ENCODE measurements at regions of chr6 and their contacts with region 1.

Region 1: GRCh38 chr6:33620856-33621710 is at the start of gene ITPR3:
- DNase-seq: peak; percentile 28
- ATAC-seq: peak; percentile 80
- H3K4me3 ChIP-seq: peak within 1 kb of the TSS; percentile 86
- H3K27ac ChIP-seq: peak within 1 kb of the TSS; percentile 88
- H3K4me1 ChIP-seq: peaks cover 14% of the 10 kb centered on the region
- H3K27me3 ChIP-seq: no peaks in the 10 kb centered on the region
- CTCF ChIP-seq: no peak
- EP300 ChIP-seq: no peak
- POLR2A ChIP-seq: peak; percentile 72
- RAD21 ChIP-seq: no peak
- polyA plus RNA-seq, gene ITPR3: 0.32 to 0.44 TPM

Region 2: DNA sequence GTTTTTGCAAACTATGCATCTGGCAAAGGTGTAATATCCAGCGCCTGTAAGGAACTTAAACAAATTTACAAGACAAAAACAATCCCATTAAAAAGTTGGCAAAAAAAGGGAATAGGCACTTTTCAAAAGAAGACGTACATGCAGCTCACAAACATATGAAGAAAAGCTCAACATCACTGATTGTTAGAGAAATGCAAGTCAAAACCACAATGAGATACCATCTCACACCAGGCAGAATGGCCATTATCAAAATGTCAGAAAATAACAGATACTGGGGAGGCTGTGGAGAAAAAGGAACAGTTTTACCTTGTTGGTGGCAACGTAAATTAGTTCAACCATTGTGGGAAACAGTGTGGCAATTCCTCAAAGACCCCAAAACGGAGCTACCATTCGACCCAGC is 1303.5 kb before region 1 on chr6:
- CTCF ChIA-PET with region 1: no interaction called
- POLR2A ChIA-PET with region 1: no interaction called
- RAD21 ChIA-PET with region 1: no interaction called
- SMC1A ChIA-PET with region 1: no interaction called
- in situ Hi-C with region 1: no loop called
- intact Hi-C with region 1: no loop called
- DNase-seq: no peak
- ATAC-seq: no peak
- H3K4me3 ChIP-seq: no peak overlapping the region
- H3K27ac ChIP-seq: no peak overlapping the region
- H3K4me1 ChIP-seq: no peaks in the 10 kb centered on the region
- H3K27me3 ChIP-seq: peaks cover 0 to 5% of the 10 kb centered on the region in 2 experiments; a peak in 2 of 4 replicates
- CTCF ChIP-seq: no peak
- EP300 ChIP-seq: no peak
- POLR2A ChIP-seq: no peak
- RAD21 ChIP-seq: no peak

Region 3: GRCh38 chr6:33579828-33580714 is 41.0 kb before region 1 on chr6 and contains the start of gene BAK1:
- CTCF ChIA-PET with region 1: interaction called, 3 read pairs
- POLR2A ChIA-PET with region 1: interaction called, 11 read pairs
- RAD21 ChIA-PET with region 1: interaction called, 8 read pairs
- SMC1A ChIA-PET with region 1: interaction called, 3 read pairs
- in situ Hi-C with region 1: no loop called
- intact Hi-C with region 1: no loop called
- DNase-seq: peak; percentile 56
- ATAC-seq: peak; percentile 93
- H3K4me3 ChIP-seq: peak within 1 kb of the TSS; percentile 93
- H3K27ac ChIP-seq: peak within 1 kb of the TSS; percentile 95
- H3K4me1 ChIP-seq: peaks cover 16% of the 10 kb centered on the region
- H3K27me3 ChIP-seq: no peaks in the 10 kb centered on the region
- CTCF ChIP-seq: peak; percentile 41 to 57 (median 54); a peak in 5 of 6 replicates
- EP300 ChIP-seq: no peak
- POLR2A ChIP-seq: peak; percentile 76
- RAD21 ChIP-seq: 0 out of 2 replicates have a peak, but pooled peaks have one; percentile 22
- polyA plus RNA-seq, gene BAK1: 6.3 to 13.0 TPM

Region 4: GRCh38 chr6:33592411-33593054 is 28.6 kb before region 1 on chr6:
- CTCF ChIA-PET with region 1: interaction called, 18 read pairs
- POLR2A ChIA-PET with region 1: interaction called, 4 read pairs
- RAD21 ChIA-PET with region 1: interaction called, 14 read pairs
- SMC1A ChIA-PET with region 1: interaction called, 7 read pairs
- in situ Hi-C with region 1: no loop called
- intact Hi-C with region 1: no loop called
- DNase-seq: peak; percentile 63
- ATAC-seq: peak; percentile 59
- H3K4me3 ChIP-seq: peak overlapping the region; percentile 46; the same call in 1 of the 2 replicates
- H3K27ac ChIP-seq: peak overlapping the region; percentile 23
- H3K4me1 ChIP-seq: peaks cover 44% of the 10 kb centered on the region
- H3K27me3 ChIP-seq: no peaks in the 10 kb centered on the region
- CTCF ChIP-seq: no peak
- EP300 ChIP-seq: no peak
- POLR2A ChIP-seq: no peak; the same call in 1 of the 2 replicates
- RAD21 ChIP-seq: no peak

Region 5: GRCh38 chr6:33633462-33634158 is 12.5 kb after region 1 on chr6:
- CTCF ChIA-PET with region 1: interaction called, 18 read pairs
- POLR2A ChIA-PET with region 1: interaction called, 6 read pairs
- RAD21 ChIA-PET with region 1: interaction called, 6 read pairs
- SMC1A ChIA-PET with region 1: interaction called, 5 read pairs
- in situ Hi-C with region 1: no loop called
- intact Hi-C with region 1: no loop called
- DNase-seq: no peak
- ATAC-seq: peak; percentile 85
- H3K4me3 ChIP-seq: peak overlapping the region; percentile 70
- H3K27ac ChIP-seq: no peak overlapping the region
- H3K4me1 ChIP-seq: peaks cover 12% of the 10 kb centered on the region
- H3K27me3 ChIP-seq: no peaks in the 10 kb centered on the region
- CTCF ChIP-seq: no peak
- EP300 ChIP-seq: no peak
- POLR2A ChIP-seq: 0 out of 2 replicates have a peak, but pooled peaks have one; percentile 38
- RAD21 ChIP-seq: no peak

Region 6: GRCh38 chr6:33711140-33712129 is 90.4 kb after region 1 on chr6 and contains the start of gene UQCC2:
- CTCF ChIA-PET with region 1: interaction called, 10 read pairs
- POLR2A ChIA-PET with region 1: interaction called, 4 read pairs
- RAD21 ChIA-PET with region 1: interaction called, 3 read pairs
- SMC1A ChIA-PET with region 1: interaction called, 3 read pairs
- in situ Hi-C with region 1: no loop called
- intact Hi-C with region 1: no loop called
- DNase-seq: peak; percentile 84
- ATAC-seq: peak; percentile 97
- H3K4me3 ChIP-seq: peak within 1 kb of the TSS; percentile 83
- H3K27ac ChIP-seq: peak within 1 kb of the TSS; percentile 98
- H3K4me1 ChIP-seq: peaks cover 28% of the 10 kb centered on the region
- H3K27me3 ChIP-seq: no peaks in the 10 kb centered on the region
- CTCF ChIP-seq: peak; percentile 66 to 87 (median 68)
- EP300 ChIP-seq: no peak
- POLR2A ChIP-seq: peak; percentile 93
- RAD21 ChIP-seq: peak; percentile 64
- polyA plus RNA-seq, gene UQCC2: 433 to 478 TPM

Measured in GM12878 (cell line).